ENCODE measurements at regions of chr10 and their contacts with region 1.

Region 1: DNA sequence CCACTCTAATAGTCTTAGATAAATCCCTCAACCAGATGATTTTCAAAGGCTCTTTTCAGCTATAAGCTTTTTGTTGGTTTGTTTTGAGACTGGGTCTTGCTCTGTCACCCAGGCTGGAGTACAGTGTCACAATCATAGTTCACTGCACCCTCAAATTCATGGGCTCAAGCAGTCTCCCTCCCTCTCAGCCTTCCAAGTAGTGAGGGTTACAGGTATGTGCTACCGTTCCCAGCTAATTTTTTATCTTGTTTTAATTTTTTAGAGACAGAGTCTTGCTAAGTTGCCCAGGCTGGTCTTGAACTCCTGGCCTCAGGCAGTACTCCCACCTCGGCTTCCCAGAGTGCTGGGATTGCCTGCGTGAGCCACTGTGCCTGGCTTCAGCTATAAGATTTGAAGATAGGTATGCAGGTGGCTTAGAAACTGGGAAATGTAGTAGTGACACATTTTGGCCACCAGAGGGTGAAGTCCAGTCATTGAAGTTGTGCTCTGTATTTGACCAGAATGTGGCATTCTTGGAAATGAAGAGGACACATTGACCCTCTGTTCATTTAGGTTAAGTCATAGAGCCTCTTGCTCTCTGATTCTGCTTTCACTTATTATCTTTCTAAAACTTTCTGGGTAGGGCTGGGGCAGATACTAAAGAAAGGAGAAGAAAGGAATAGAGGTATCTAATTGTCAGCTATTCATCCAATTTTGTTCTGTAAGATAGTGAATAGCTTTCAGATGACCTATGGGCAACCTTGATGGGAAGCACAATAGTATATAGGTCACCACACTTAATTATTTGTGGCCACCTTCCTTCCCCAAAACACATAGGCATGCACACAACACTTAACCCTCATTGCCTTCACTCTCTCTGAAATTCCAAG is 36.0 kb downstream of the R3HCC1L start:
- DNase-seq: peak; percentile 46 to 66
- H3K4me3 ChIP-seq: no peak overlapping the region
- H3K27ac ChIP-seq: no peak overlapping the region
- H3K4me1 ChIP-seq: peaks cover 6 to 14% (median 12%) of the 10 kb centered on the region in 4 experiments
- H3K27me3 ChIP-seq: no peaks in the 10 kb centered on the region
- CTCF ChIP-seq: peak in 2 of 3 experiments; percentile 61 to 82; a peak in 3 of 4 replicates
- EP300 ChIP-seq: no peak
- POLR2A ChIP-seq: no peak
- RAD21 ChIP-seq: peak; percentile 66 to 75

Region 2: GRCh38 chr10:98186681-98187080 is 16.2 kb after region 1 on chr10:
- CTCF ChIA-PET with region 1: interaction called, 26 read pairs
- POLR2A ChIA-PET with region 1: no interaction called
- DNase-seq: no peak
- H3K4me3 ChIP-seq: no peak overlapping the region
- H3K27ac ChIP-seq: no peak overlapping the region
- H3K4me1 ChIP-seq: no peaks in the 10 kb centered on the region
- H3K27me3 ChIP-seq: no peaks in the 10 kb centered on the region
- CTCF ChIP-seq: no peak
- EP300 ChIP-seq: no peak
- POLR2A ChIP-seq: no peak
- RAD21 ChIP-seq: no peak

Region 3: GRCh38 chr10:98195120-98195519 is 24.6 kb after region 1 on chr10:
- CTCF ChIA-PET with region 1: interaction called, 10 read pairs
- POLR2A ChIA-PET with region 1: interaction called, 3 read pairs
- DNase-seq: no peak
- H3K4me3 ChIP-seq: no peak overlapping the region
- H3K27ac ChIP-seq: no peak overlapping the region
- H3K4me1 ChIP-seq: no peaks in the 10 kb centered on the region
- H3K27me3 ChIP-seq: no peaks in the 10 kb centered on the region
- CTCF ChIP-seq: no peak
- EP300 ChIP-seq: no peak
- POLR2A ChIP-seq: no peak
- RAD21 ChIP-seq: no peak

Measured in H1 (cell line).